ENCODE measurements at regions of chr20 and their contacts with region 1.

Region 1: GRCh38 chr20:1503564-1504227 is 12.5 kb upstream of the SIRPB2 start:
- DNase-seq: peak; percentile 93
- H3K4me3 ChIP-seq: no peak overlapping the region
- H3K27ac ChIP-seq: no peak overlapping the region
- H3K4me1 ChIP-seq: no peaks in the 10 kb centered on the region
- H3K27me3 ChIP-seq: no peaks in the 10 kb centered on the region
- CTCF ChIP-seq: peak; percentile 100

Region 2: DNA sequence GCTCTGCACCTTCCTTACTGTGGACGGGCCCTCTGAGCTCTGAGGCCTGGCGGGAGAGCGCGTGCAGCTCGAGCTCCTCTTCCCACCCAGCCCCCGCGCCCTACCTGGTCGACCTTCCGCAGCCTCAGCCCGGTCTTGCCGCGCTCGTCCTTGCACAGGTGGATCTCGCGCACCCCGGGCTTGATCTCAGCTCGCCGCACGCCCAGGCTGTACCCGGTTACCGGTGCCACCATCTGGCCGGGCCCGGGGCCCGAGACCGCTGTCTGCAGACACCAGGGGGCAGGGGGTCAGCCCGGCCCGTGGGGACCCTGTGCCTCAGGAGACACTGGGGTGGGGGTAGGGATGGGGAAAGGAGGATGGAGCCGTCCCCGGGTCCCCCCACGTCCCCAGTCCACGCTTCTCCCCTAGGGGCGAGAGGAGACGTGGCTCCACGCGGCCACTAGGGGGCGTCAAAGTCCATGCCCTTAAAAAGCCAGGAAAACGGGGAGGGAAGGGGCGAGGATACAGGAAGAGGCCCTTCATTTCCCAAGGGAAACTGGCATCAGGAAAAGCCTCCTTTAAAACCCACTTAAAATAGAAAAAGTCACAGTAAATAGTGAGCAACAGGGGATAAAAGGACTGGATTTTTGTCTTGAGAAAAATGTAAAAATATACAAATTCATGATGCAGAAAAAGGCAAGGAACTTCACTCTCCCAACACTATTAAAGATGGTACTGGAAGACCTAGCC is 190.3 kb before region 1 on chr20:
- CTCF ChIA-PET with region 1: interaction called, 10 read pairs
- POLR2A ChIA-PET with region 1: no interaction called
- intact Hi-C with region 1: no loop called
- DNase-seq: peak; percentile 87
- H3K4me3 ChIP-seq: no peak overlapping the region
- H3K27ac ChIP-seq: peak overlapping the region; percentile 1
- H3K4me1 ChIP-seq: peaks cover 5% of the 10 kb centered on the region
- H3K27me3 ChIP-seq: no peaks in the 10 kb centered on the region
- CTCF ChIP-seq: peak; percentile 96

Region 3: DNA sequence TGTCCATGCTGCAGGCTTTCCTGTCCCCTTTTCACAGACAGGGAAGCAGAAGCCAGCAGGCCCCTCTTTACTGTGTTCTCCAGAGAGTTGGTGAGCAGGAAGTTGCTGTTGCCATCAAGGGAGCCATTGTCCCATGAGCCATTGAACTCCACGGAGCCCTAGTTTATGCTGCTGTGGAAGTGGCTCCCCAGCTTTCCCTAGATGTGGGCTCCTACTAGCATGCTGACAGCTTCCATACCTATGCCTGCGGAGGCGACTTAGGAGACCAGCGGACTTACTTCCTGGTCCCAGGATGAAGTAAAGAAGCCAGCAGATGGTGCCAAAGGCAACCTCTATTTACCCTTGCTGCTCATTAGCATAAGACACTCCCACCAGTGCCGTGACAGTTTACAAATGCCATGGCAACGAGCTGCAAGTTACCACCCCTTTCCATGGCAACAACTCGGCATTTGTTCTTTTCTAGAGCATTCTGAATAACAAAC is 80.0 kb before region 1 on chr20:
- CTCF ChIA-PET with region 1: interaction called, 16 read pairs
- POLR2A ChIA-PET with region 1: no interaction called
- intact Hi-C with region 1: loop called (anchors 5 kb)
- DNase-seq: peak; percentile 93
- H3K4me3 ChIP-seq: no peak overlapping the region
- H3K27ac ChIP-seq: no peak overlapping the region
- H3K4me1 ChIP-seq: peaks cover 26% of the 10 kb centered on the region
- H3K27me3 ChIP-seq: no peaks in the 10 kb centered on the region
- CTCF ChIP-seq: peak; percentile 64

Region 4: GRCh38 chr20:1466211-1467081 is 37.2 kb before region 1 on chr20 and contains the start of gene NSFL1C:
- CTCF ChIA-PET with region 1: interaction called, 15 read pairs
- POLR2A ChIA-PET with region 1: no interaction called
- intact Hi-C with region 1: no loop called
- DNase-seq: peak; percentile 96
- H3K4me3 ChIP-seq: peak within 1 kb of the TSS; percentile 98
- H3K27ac ChIP-seq: peak within 1 kb of the TSS; percentile 97
- H3K4me1 ChIP-seq: peaks cover 13% of the 10 kb centered on the region
- H3K27me3 ChIP-seq: no peaks in the 10 kb centered on the region
- CTCF ChIP-seq: peak; percentile 82
- total RNA-seq, gene NSFL1C: 148 and 158 TPM in 2 replicates

Region 5: DNA sequence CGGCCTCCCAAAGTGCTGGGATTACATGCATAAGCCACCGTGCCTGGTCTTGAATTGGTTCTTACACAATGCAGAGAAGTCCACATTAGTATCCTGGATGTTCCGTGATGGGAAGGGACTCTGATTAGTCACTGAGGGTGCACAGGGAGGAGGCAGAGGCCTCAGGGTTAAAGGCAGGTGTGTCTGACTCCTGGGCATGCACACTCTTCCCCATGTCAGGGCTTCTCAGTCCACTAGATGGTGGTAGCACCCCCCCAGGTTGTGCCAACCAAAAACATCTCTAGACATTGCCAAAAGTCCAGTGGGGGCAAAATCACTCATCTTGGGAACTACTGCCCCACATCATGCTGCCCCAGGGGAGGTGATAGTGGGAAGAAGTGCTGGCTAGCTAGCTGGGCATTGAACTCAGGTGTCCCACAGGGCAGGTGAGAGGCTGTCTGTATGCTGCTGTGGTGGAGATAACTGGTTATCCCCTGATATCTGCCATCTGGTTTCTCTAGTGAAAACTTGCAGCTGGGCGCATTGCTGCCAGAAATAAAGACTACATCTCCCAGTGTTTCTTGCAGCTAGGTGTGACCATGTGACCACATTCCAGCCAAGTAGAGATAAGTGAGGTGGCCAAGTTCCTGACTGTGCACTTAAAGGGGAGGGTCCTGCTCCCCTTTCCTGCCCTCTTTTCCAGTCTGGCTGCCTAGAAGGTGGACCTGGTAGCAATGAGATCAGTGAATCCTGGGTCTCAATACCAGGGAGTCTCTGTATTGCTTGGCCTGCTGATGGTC is 28.7 kb before region 1 on chr20:
- CTCF ChIA-PET with region 1: interaction called, 6 read pairs
- POLR2A ChIA-PET with region 1: no interaction called
- intact Hi-C with region 1: loop called (anchors 2 kb)
- DNase-seq: no peak
- H3K4me3 ChIP-seq: no peak overlapping the region
- H3K27ac ChIP-seq: no peak overlapping the region
- H3K4me1 ChIP-seq: no peaks in the 10 kb centered on the region
- H3K27me3 ChIP-seq: no peaks in the 10 kb centered on the region
- CTCF ChIP-seq: peak; percentile 33; the same call in 1 of the 2 replicates

Region 6: DNA sequence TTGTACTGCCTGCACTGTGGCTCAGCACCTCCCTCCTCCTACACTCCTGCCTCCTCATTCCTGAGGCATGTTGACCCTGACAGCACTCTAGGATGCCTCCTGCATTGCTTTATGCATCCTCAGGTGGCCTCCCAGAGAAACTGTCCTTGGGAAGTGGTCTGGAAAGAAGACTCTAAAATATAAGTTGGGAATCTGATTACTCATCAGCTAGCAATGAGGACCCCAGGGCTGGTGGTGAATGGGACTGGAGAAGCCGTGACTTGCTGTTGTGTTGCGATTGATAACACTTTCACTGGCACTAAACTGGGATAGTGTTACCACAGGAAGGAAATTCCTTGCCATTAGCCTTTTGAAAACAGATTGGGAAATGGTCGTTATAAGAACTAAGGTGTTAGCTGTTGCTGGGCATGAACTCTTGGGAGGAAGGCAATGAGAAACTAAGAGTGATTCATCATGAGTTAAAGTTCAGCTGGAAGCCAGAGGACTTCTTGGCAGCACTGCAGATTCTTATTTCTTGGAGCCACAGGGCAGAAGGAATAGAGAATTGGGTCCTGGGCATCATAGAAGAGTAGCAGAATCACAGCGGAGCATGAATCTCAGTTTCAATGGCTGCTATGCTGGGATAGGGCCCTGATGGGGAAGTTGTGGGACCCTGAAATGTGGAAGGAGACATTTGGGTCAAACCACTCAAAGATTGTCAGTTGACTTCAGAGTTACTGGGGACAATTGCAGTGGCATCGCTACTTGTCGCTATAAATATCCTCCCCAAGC is 63.9 kb after region 1 on chr20:
- CTCF ChIA-PET with region 1: no interaction called
- POLR2A ChIA-PET with region 1: no interaction called
- intact Hi-C with region 1: no loop called
- DNase-seq: no peak
- H3K4me3 ChIP-seq: no peak overlapping the region
- H3K27ac ChIP-seq: no peak overlapping the region
- H3K4me1 ChIP-seq: no peaks in the 10 kb centered on the region
- H3K27me3 ChIP-seq: no peaks in the 10 kb centered on the region
- CTCF ChIP-seq: no peak

Region 7: GRCh38 chr20:1631309-1632151 is 127.8 kb after region 1 on chr20:
- CTCF ChIA-PET with region 1: no interaction called
- POLR2A ChIA-PET with region 1: no interaction called
- intact Hi-C with region 1: no loop called
- DNase-seq: no peak
- H3K4me3 ChIP-seq: no peak overlapping the region
- H3K27ac ChIP-seq: no peak overlapping the region
- H3K4me1 ChIP-seq: no peaks in the 10 kb centered on the region
- H3K27me3 ChIP-seq: peaks cover 15% of the 10 kb centered on the region
- CTCF ChIP-seq: no peak

Measured in A673 (cell line).